ENCODE measurements at regions of chr3 and their contacts with region 1.

Region 1: GRCh38 chr3:198080521-198081280 is 120.7 kb downstream of the LMLN start:
- H3K4me3 Mint-ChIP-seq: peak overlapping the region; percentile 77
- H3K27ac Mint-ChIP-seq: peak overlapping the region; percentile 65
- H3K4me1 Mint-ChIP-seq: no peaks in the 10 kb centered on the region
- H3K27me3 Mint-ChIP-seq: peaks cover 66% of the 10 kb centered on the region

Region 2: DNA sequence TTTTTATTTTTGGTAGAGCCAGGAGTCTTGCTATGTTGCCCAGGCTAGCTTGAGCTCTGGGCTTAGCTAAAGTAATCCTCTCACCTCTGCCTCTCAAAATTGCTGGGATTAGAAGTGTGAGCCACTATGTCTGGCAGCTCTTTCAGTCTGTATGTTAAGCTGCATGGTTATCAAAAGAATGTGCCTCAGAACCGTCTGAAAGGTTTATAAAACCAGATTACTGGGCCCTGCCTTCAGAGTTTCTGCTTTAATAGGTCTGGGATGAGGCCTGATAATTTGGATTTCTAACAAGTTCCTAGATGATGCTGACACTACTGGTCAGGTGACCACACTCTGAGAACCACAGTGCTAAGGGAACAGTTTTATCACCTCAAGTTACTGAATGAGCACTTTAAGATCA is 1178.4 kb before region 1 on chr3:
- intact Hi-C with region 1: no loop called
- H3K4me3 Mint-ChIP-seq: no peak overlapping the region
- H3K27ac Mint-ChIP-seq: no peak overlapping the region
- H3K4me1 Mint-ChIP-seq: no peaks in the 10 kb centered on the region
- H3K27me3 Mint-ChIP-seq: no peaks in the 10 kb centered on the region

Region 3: GRCh38 chr3:197959898-197960693 is 120.6 kb before region 1 on chr3 and contains the start of gene LMLN:
- intact Hi-C with region 1: loop called (anchors 10 kb)
- H3K4me3 Mint-ChIP-seq: peak within 1 kb of the TSS; percentile 98
- H3K27ac Mint-ChIP-seq: peak within 1 kb of the TSS; percentile 92
- H3K4me1 Mint-ChIP-seq: peaks cover 71% of the 10 kb centered on the region
- H3K27me3 Mint-ChIP-seq: no peaks in the 10 kb centered on the region

Region 4: GRCh38 chr3:197975311-197975710 is 105.4 kb before region 1 on chr3:
- intact Hi-C with region 1: no loop called
- H3K4me3 Mint-ChIP-seq: no peak overlapping the region
- H3K27ac Mint-ChIP-seq: no peak overlapping the region
- H3K4me1 Mint-ChIP-seq: no peaks in the 10 kb centered on the region
- H3K27me3 Mint-ChIP-seq: no peaks in the 10 kb centered on the region

Region 5: GRCh38 chr3:198043119-198043518 is 37.6 kb before region 1 on chr3:
- intact Hi-C with region 1: no loop called
- H3K4me3 Mint-ChIP-seq: no peak overlapping the region
- H3K27ac Mint-ChIP-seq: no peak overlapping the region
- H3K4me1 Mint-ChIP-seq: no peaks in the 10 kb centered on the region
- H3K27me3 Mint-ChIP-seq: no peaks in the 10 kb centered on the region